Thyroid gland (tissue), 4 donors: ENCODE measurements at regions of chr11 and their contacts with region 1.

Region 1: DNA sequence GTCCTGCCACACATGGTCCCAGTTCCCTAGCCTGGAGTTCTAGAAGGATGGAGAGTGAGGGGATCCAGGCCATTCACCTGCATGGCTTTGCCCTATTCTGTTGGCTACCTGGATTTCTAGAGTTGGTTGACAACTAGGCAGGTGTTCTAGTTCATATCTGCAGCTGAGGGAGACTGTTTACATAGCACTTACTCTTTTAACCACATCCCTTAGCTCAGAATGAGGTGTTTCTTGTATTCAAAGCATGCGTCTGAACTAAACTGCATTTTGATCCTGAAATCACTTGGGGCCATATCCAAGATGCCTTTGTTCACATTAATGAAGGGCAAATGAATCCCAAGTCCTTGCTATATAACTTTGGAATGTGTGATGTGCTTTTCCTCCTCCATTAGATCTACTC is 60.9 kb downstream of the SYT13 start:
- DNase-seq: no peak
- H3K4me3 ChIP-seq: no peak overlapping the region
- H3K27ac ChIP-seq: no peak overlapping the region
- H3K4me1 ChIP-seq: no peaks in the 10 kb centered on the region
- H3K27me3 ChIP-seq: no peaks in the 10 kb centered on the region
- CTCF ChIP-seq: no peak
- POLR2A ChIP-seq: no peak

Region 2: GRCh38 chr11:44793350-44794090 is 431.8 kb before region 1 on chr11:
- intact Hi-C with region 1: no loop called
- DNase-seq: peak; percentile 17 to 51
- H3K4me3 ChIP-seq: no peak overlapping the region
- H3K27ac ChIP-seq: no peak overlapping the region
- H3K4me1 ChIP-seq: peaks cover 0 to 31% of the 10 kb centered on the region in 2 donors
- H3K27me3 ChIP-seq: no peaks in the 10 kb centered on the region
- CTCF ChIP-seq: no peak
- POLR2A ChIP-seq: no peak

Region 3: DNA sequence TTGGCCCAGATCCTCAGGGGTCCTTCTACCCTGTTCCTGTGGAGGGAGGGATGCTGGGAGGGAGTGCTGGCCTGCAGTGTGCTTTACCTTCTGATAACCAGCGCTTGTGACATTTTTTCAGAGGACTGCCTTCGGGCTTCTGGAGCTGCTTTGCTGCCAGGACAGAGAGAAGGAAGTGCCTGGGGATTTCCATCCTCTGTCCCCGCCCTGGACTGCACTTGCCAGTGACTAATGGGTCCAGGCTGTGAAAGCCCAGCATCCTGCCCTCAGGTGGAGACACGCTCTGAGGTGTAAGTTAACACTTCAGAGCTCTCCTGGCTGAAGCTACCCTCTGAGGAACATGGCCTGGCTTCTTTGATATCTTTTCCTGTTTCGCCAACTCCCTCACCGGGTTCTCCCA is 219.5 kb after region 1 on chr11:
- intact Hi-C with region 1: loop called (anchors 5 kb)
- DNase-seq: no peak
- H3K4me3 ChIP-seq: no peak overlapping the region
- H3K27ac ChIP-seq: no peak overlapping the region
- H3K4me1 ChIP-seq: no peaks in the 10 kb centered on the region
- H3K27me3 ChIP-seq: no peaks in the 10 kb centered on the region
- CTCF ChIP-seq: no peak
- POLR2A ChIP-seq: no peak